ENCODE measurements at regions of chrX and their contacts with region 1.

Region 1: DNA sequence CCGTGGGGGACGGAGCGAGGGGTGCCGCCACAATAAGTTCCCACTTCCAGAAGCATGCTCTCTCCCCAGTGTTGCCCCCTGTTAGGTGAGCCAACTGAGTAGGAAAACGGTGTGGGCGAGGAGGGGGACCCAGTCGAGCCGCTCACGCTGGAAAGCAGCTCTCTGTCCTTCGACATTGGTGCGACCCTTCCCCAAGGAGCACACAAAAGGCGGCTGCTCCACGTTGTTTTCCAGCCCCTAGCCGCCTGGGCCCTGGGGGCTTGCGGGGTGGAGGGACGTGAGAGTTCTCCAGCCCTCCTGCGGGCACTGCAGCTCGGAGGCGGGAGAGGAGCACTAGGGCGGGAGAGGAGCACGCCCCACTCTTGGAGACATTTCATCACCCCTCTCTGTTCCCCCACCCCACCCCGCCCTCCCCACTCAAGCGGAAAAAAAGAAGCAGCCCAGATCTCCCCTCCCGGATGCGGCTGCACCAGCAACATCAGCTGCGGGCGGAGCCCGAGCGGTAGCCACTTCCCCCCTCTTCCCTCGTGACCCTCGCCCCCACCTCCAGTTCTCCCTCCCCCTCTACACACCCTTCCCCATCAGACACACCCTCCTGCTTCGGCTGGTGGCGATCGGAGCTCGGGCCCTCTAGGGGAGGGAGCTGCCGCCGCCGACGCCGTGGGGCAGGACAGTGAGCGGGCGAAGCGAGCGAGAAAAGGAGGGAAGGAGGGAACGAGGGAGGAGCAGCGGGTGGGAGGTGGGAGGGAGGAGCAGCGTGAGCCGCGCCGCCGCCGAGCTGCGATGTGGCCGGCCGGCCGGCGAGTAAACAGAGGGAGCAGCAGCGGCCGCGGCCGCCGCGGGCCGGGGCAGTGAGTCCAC is at the start of gene DOCK11:
- DNase-seq: peak; percentile 89
- ATAC-seq: peak; percentile 72
- H3K4me3 Mint-ChIP-seq: peak within 1 kb of the TSS; percentile 99
- H3K27ac Mint-ChIP-seq: peak within 1 kb of the TSS; percentile 99
- H3K4me1 Mint-ChIP-seq: peaks cover 31% of the 10 kb centered on the region
- H3K27me3 Mint-ChIP-seq: no peaks in the 10 kb centered on the region
- total RNA-seq, gene DOCK11: 62.6 to 66.0 TPM

Region 2: GRCh38 chrX:118174516-118174915 is 320.8 kb before region 1 on chrX:
- CTCF ChIA-PET with region 1: no interaction called
- POLR2A ChIA-PET with region 1: no interaction called
- DNase-seq: no peak
- ATAC-seq: no peak
- H3K4me3 Mint-ChIP-seq: no peak overlapping the region
- H3K27ac Mint-ChIP-seq: no peak overlapping the region
- H3K4me1 Mint-ChIP-seq: peaks cover 2% of the 10 kb centered on the region
- H3K27me3 Mint-ChIP-seq: no peaks in the 10 kb centered on the region

Region 3: GRCh38 chrX:118345401-118346257 is 149.7 kb before region 1 on chrX and contains the start of gene WDR44:
- CTCF ChIA-PET with region 1: no interaction called
- POLR2A ChIA-PET with region 1: interaction called, 22 read pairs
- DNase-seq: peak; percentile 94
- ATAC-seq: peak; percentile 94
- H3K4me3 Mint-ChIP-seq: peak within 1 kb of the TSS; percentile 95
- H3K27ac Mint-ChIP-seq: peak within 1 kb of the TSS; percentile 97
- H3K4me1 Mint-ChIP-seq: peaks cover 33% of the 10 kb centered on the region
- H3K27me3 Mint-ChIP-seq: no peaks in the 10 kb centered on the region
- total RNA-seq, gene WDR44: 26.5 to 29.7 TPM

Region 4: DNA sequence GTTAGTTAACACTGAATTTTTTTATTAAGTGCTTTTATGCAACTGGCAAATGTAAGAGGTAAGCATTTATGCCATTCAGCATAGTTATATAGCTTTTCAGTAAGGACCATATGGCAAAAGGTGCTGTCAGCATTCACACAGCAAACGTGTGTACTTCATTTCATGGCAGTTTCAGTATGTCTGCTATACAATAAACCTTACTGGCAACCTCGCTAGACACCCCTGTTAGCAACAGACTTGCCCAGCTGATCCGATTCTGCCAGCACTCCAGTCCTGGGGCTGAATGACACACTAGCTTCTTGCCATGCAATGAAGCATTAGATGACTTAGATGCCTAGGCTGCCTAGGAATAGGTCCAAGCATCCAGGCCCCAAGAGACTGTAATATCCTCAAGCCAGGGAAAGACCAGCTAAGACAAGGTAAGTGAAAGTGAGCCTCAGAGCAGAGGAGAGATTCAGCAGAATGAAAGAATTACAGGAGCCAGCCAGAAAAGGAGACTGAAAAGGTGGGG is 47.0 kb before region 1 on chrX:
- CTCF ChIA-PET with region 1: no interaction called
- POLR2A ChIA-PET with region 1: no interaction called
- DNase-seq: no peak
- ATAC-seq: no peak
- H3K4me3 Mint-ChIP-seq: no peak overlapping the region
- H3K27ac Mint-ChIP-seq: no peak overlapping the region
- H3K4me1 Mint-ChIP-seq: no peaks in the 10 kb centered on the region
- H3K27me3 Mint-ChIP-seq: no peaks in the 10 kb centered on the region

Region 5: GRCh38 chrX:118459494-118459893 is 35.8 kb before region 1 on chrX:
- CTCF ChIA-PET with region 1: interaction called, 4 read pairs
- POLR2A ChIA-PET with region 1: interaction called, 10 read pairs
- DNase-seq: peak; percentile 27
- ATAC-seq: peak; percentile 71
- H3K4me3 Mint-ChIP-seq: no peak overlapping the region
- H3K27ac Mint-ChIP-seq: no peak overlapping the region
- H3K4me1 Mint-ChIP-seq: no peaks in the 10 kb centered on the region
- H3K27me3 Mint-ChIP-seq: no peaks in the 10 kb centered on the region

Region 6: GRCh38 chrX:118520216-118521206 is 25.2 kb after region 1 on chrX:
- CTCF ChIA-PET with region 1: interaction called, 3 read pairs
- POLR2A ChIA-PET with region 1: interaction called, 46 read pairs
- DNase-seq: no peak
- ATAC-seq: no peak
- H3K4me3 Mint-ChIP-seq: no peak overlapping the region
- H3K27ac Mint-ChIP-seq: no peak overlapping the region
- H3K4me1 Mint-ChIP-seq: peaks cover 63% of the 10 kb centered on the region
- H3K27me3 Mint-ChIP-seq: no peaks in the 10 kb centered on the region

Region 7: DNA sequence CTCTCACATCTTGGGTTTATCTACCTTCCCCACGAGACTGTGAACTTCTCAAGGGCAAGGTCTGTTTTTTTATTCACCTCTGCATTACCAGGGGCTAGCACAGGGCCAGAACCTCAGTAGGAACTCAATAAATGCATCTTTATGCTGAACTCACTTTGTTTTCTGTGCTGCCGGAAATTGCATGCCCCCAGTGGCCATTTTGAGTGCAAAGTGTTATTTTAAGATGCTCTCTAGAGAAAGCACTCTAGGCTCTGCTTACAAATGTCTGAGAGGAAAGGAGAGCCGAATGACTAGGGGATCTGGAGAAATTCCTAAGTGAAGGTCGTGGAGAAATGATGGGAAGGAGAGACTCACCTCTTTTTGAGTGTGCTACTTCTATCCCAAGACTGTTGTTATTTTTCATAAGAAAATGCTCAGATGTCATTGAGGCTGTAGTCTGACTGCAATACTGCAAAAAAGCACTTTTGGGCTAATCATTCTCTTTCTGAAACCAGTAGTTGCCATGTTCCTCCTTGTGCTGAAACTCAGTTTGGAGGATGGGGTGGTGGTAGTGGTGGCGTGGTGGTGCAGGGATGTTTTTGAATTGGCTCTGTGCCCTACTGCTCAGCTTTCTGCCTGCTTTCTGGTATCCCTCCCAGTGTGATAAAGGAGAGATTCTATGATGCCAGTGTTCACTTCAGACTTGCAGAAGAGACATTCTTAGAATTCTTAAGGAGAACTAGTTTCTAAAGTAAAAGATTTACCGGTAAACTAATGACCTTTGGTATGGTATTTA is 41.6 kb after region 1 on chrX:
- CTCF ChIA-PET with region 1: interaction called, 23 read pairs
- POLR2A ChIA-PET with region 1: interaction called, 155 read pairs
- DNase-seq: peak; percentile 65
- ATAC-seq: peak; percentile 84
- H3K4me3 Mint-ChIP-seq: peak overlapping the region; percentile 42
- H3K27ac Mint-ChIP-seq: peak overlapping the region; percentile 89
- H3K4me1 Mint-ChIP-seq: peaks cover 54% of the 10 kb centered on the region
- H3K27me3 Mint-ChIP-seq: no peaks in the 10 kb centered on the region

Region 8: GRCh38 chrX:118577041-118577440 is 81.8 kb after region 1 on chrX:
- CTCF ChIA-PET with region 1: no interaction called
- POLR2A ChIA-PET with region 1: no interaction called
- DNase-seq: no peak
- ATAC-seq: no peak
- H3K4me3 Mint-ChIP-seq: no peak overlapping the region
- H3K27ac Mint-ChIP-seq: no peak overlapping the region
- H3K4me1 Mint-ChIP-seq: no peaks in the 10 kb centered on the region
- H3K27me3 Mint-ChIP-seq: no peaks in the 10 kb centered on the region

Measured in activated CD8-positive, alpha-beta T cell treated with anti-CD3 and anti-CD28 coated beads, Interleukin-2, amount 10 ng/mL, durations not matched to agents 7 days and 5 days (primary cell).